Heart left ventricle (tissue), 16 donors: ENCODE measurements at regions of chr1 and their contacts with region 1.

Region 1: GRCh38 chr1:6489799-6490180 is 1.7 kb downstream of the PLEKHG5 start:
- DNase-seq: peak; percentile 64 to 86 (median 72)
- ATAC-seq: peak; percentile 28 to 69 (median 52)
- H3K4me3 ChIP-seq: peak overlapping the region; percentile 40 to 81 (median 64)
- H3K27ac ChIP-seq: peak overlapping the region in 9 of 12 donors; percentile 64 to 86 (median 77)
- H3K4me1 ChIP-seq: peaks cover 3 to 80% (median 50%) of the 10 kb centered on the region in 12 donors
- H3K27me3 ChIP-seq: peaks cover 0 to 27% (median 4%) of the 10 kb centered on the region in 9 donors
- CTCF ChIP-seq: peak; percentile 86 to 97 (median 92)
- POLR2A ChIP-seq: no peak

Region 2: DNA sequence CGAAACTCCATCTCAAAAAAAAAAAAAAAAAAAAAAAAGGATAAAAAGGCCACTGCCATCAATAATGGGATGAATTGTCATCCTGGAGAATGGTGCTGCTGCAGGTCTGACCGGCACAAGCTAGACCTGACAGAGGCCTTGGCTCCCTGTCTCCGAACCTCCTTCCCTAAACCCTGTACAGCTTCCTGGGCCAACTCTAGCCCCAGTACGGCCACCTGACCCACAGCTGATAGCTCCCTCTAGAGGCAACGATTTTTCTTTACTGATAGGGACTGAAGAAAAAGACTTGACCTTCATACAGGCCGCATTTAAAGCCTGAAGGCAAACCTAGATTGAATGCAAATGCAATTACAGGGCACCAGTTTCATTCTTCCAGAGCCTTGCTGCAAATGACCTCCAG is 33.8 kb after region 1 on chr1:
- intact Hi-C with region 1: loop called (anchors 1 to 5 kb)
- DNase-seq: peak in 2 of 5 donors; percentile 26 to 38
- ATAC-seq: peak in 3 of 4 donors; percentile 62 to 70 (median 70)
- H3K4me3 ChIP-seq: no peak overlapping the region
- H3K27ac ChIP-seq: no peak overlapping the region
- H3K4me1 ChIP-seq: peaks cover 0 to 20% (median 9%) of the 10 kb centered on the region in 12 donors
- H3K27me3 ChIP-seq: no peaks in the 10 kb centered on the region
- CTCF ChIP-seq: peak; percentile 41 to 68 (median 50)
- POLR2A ChIP-seq: no peak

Region 3: GRCh38 chr1:6624710-6625583 is 135.2 kb after region 1 on chr1 and contains the start of gene THAP3:
- intact Hi-C with region 1: loop called in 2 of 10 experiments (anchors 10 kb)
- DNase-seq: peak; percentile 90 to 95 (median 92)
- ATAC-seq: peak; percentile 70 to 95 (median 95)
- H3K4me3 ChIP-seq: peak within 1 kb of the TSS; percentile 60 to 98 (median 82)
- H3K27ac ChIP-seq: peak within 1 kb of the TSS; percentile 69 to 90 (median 84)
- H3K4me1 ChIP-seq: peaks cover 3 to 28% (median 18%) of the 10 kb centered on the region in 12 donors
- H3K27me3 ChIP-seq: no peaks in the 10 kb centered on the region
- CTCF ChIP-seq: peak in 4 of 12 donors; percentile 13 to 37 (median 16)
- POLR2A ChIP-seq: peak in 1 of 2 donors; percentile 40
- total RNA-seq, gene THAP3: 7.5 to 20.7 (median 12.1) TPM

Region 4: DNA sequence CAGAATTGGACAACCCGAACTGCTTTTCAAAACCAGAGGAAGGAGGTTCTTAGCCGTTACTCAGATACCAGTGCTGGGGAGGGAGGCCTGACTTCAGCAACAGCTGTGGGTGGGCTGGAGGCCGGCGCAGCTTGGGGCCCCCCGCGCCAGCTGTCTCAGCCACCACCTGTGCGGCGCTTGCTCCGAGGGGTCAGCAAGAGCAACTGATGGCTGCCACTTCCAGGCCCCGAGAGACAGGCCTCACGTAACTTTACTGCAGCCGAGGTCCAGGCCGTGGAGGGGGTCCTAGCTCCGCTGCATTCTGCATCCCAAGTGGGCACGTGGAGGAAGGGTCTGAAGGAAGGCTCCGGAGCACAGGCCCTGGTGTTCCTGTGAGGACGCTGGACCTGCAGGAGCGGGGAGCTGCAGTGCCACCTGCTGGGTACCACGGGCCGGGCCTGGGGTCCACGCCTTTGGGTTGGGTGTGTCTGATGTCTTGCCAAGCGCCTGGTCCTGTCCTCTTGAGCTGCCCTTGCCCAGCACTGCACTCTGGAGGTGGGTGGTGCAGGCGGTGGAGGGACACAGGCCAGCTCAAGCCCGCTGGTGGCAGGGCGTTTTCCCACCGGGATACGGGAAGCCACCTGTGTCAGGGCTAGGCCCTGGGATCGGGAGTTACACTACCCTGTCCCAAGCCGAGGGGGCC is 144.7 kb after region 1 on chr1:
- intact Hi-C with region 1: loop called in 2 of 10 experiments (anchors 10 kb)
- DNase-seq: peak; percentile 61 to 83 (median 80)
- ATAC-seq: peak; percentile 59 to 84 (median 80)
- H3K4me3 ChIP-seq: no peak overlapping the region
- H3K27ac ChIP-seq: peak overlapping the region in 4 of 12 donors; percentile 11 to 48 (median 30)
- H3K4me1 ChIP-seq: peaks cover 0 to 15% (median 0%) of the 10 kb centered on the region in 12 donors
- H3K27me3 ChIP-seq: no peaks in the 10 kb centered on the region
- CTCF ChIP-seq: peak; percentile 19 to 68 (median 53)
- POLR2A ChIP-seq: no peak

Region 5: DNA sequence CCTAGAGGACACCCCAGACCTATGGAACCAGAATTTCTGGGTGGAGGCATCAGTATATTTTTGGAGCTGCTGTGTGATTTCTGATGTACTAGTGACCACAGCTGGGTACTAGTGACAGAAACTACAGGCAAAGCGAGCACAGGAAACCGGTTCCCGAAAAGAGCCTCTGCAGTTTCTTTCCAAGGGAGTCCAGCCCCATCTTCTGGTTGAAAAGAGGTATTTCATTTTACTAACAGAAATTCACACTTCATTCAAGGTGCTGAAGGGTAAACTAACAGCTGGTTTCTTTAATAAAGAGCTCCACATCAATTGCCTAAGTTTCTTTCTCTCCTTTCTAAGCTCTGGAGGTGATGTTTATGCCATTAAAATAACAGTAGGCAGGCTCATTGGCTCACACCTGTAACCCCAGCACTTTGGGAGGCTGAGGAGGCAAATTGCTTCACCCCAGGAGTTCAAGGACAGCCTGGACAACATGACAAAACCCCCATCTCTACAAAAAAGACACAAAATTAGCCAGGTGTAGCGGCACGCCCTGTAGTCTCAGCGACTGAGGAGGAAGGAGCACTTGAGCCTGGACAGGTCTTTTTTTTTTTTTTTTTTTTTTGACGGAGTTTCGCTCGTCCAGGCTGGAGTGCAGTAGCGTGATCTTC is 156.8 kb after region 1 on chr1:
- intact Hi-C with region 1: loop called in 8 of 10 experiments (anchors 2 to 10 kb)
- DNase-seq: peak in 1 of 5 donors; percentile 32
- ATAC-seq: peak in 3 of 4 donors; percentile 37 to 45 (median 45)
- H3K4me3 ChIP-seq: no peak overlapping the region
- H3K27ac ChIP-seq: no peak overlapping the region
- H3K4me1 ChIP-seq: no peaks in the 10 kb centered on the region
- H3K27me3 ChIP-seq: no peaks in the 10 kb centered on the region
- CTCF ChIP-seq: peak; percentile 35 to 72 (median 58)
- POLR2A ChIP-seq: no peak